ENCODE measurements at regions of chr20 and their contacts with region 1.

Region 1: DNA sequence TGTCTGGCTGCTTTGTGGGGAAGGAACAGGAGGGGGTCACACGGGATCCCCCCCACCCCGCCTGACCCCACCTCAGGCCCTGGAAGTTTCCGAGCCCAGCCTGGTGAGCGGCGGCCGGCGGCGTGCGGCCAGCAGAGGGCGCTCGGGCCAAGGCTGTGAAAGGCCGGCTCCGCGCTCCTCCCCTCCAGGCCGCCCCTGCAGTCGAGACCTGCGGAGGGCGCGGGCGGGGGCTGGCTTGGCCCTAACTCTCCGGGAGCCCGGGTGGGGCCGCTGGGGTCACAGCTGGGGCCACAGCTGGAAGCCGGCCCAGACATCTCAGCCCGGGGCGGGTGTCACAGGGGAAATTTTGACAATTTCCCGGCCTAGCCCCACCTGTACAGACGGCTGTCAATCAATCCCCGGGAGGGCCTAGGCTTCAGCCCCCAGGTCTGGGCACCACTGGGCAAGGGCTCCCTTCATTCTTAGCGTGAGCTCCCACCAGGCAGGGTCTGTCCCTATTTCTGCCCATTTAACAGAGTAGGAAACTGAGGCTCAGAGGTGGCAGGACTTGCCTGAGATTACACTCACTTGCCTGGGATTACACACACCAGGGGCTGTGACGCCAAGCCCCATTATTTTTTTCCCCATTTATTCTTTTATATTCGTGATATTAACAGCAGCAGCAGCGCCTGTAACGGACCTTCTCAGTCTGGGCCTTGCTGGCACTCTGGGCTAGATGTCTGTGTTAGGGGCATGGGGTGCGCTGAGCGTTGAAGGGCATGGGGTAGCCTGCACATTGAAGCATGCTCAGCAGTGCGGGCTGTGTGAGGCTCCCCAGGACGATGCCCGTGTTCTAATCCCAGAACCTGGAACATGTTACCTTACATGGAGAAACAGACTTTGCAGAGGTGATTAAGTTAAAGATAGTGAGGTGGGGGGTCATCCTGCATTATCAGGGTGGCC is 23.0 kb downstream of the ZBP1 start:
- DNase-seq: peak; percentile 64
- H3K4me3 ChIP-seq: no peak overlapping the region
- H3K27ac ChIP-seq: no peak overlapping the region
- H3K4me1 ChIP-seq: no peaks in the 10 kb centered on the region
- H3K27me3 ChIP-seq: no peaks in the 10 kb centered on the region
- CTCF ChIP-seq: peak; percentile 85

Region 2: DNA sequence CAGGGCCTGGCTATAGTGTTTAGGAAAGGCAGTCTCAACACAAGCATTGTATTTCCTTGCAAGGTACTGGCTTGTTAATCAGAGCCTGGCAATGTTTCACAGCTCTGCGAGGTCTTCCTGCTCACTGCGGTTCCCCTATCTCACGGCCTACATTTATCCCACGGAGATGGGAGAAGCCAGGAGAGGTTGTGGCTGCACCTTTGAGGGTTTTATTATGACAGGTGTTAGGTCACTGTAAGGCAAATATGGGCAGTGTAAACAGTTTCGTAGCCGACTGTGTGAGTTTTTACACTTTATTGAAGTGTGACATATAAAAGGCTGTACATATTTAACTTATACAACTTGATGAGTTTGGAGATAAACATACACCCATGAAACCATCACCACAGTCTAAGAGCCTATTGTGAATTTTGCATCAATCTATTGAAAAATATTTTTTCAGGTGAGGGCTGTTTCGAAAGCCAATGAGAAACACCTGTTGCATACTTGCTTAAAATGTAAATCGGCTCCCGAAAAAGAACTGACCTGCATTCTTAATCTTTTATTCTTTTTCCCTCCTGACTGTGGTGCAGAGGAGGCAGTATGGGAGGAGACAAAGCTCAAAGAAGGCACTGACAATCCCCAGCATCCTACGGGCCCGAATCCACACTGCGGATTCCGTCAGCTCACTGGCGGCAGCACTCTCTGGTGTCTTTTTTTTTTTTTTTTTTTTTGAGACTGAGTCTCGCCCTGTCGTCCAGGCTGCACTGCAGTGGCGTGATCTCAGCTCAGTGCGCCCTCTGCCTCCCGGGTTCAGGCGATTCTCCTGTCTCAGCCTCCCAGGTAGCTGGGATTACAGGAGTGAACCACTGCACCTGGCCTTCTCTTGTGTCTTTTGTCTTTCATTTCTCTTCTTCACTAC is 213.6 kb before region 1 on chr20:
- CTCF ChIA-PET with region 1: no interaction called
- POLR2A ChIA-PET with region 1: no interaction called
- intact Hi-C with region 1: loop called (anchors 5 kb)
- DNase-seq: no peak
- H3K4me3 ChIP-seq: no peak overlapping the region
- H3K27ac ChIP-seq: no peak overlapping the region
- H3K4me1 ChIP-seq: no peaks in the 10 kb centered on the region
- H3K27me3 ChIP-seq: no peaks in the 10 kb centered on the region
- CTCF ChIP-seq: no peak

Region 3: GRCh38 chr20:57514273-57514751 is 83.0 kb before region 1 on chr20:
- CTCF ChIA-PET with region 1: interaction called, 5 read pairs
- POLR2A ChIA-PET with region 1: no interaction called
- intact Hi-C with region 1: loop called (anchors 1 kb)
- DNase-seq: peak; percentile 68
- H3K4me3 ChIP-seq: no peak overlapping the region
- H3K27ac ChIP-seq: no peak overlapping the region
- H3K4me1 ChIP-seq: no peaks in the 10 kb centered on the region
- H3K27me3 ChIP-seq: no peaks in the 10 kb centered on the region
- CTCF ChIP-seq: peak; percentile 75

Region 4: GRCh38 chr20:57582432-57583305 is 14.6 kb before region 1 on chr20:
- CTCF ChIA-PET with region 1: interaction called, 14 read pairs
- POLR2A ChIA-PET with region 1: no interaction called
- intact Hi-C with region 1: no loop called
- DNase-seq: peak; percentile 83
- H3K4me3 ChIP-seq: peak overlapping the region; percentile 24
- H3K27ac ChIP-seq: peak overlapping the region; percentile 78
- H3K4me1 ChIP-seq: peaks cover 40% of the 10 kb centered on the region
- H3K27me3 ChIP-seq: no peaks in the 10 kb centered on the region
- CTCF ChIP-seq: peak; percentile 78

Region 5: DNA sequence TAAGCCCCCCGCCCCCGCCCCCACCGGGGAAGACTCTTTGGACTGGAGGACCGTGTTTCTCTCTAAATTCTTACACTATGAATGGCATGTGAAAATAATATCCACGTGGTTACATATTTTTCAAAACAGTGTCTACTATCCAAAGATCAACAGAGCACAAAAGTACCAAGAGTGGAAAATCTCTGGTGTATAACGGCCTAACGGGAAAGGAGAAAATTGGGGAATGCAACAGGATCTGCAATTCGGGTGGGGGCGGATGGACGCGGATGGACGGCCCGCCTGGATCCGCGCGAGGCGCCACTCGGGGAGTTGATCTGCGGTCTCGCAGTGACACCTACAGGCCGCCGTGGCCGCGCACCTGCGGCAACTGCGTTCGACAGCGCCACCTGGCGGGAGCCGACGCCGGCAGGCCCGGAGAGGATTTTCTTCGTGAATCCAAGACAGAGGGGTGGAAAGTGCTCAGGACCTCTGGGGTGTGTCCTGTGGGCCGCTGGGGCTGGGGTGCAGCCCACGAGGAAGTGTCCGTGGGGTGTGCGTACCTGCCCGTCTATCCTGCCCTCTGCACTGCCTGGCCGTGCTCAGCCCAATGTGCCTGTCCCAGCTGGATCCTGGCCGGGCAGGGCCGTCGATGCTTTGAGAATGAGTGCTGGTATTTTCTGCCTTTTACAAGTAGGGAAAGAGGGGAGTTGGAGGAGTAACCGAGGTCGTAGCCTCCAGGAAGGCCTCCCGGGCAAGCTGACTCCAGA is 612.6 kb after region 1 on chr20:
- CTCF ChIA-PET with region 1: interaction called, 3 read pairs
- POLR2A ChIA-PET with region 1: no interaction called
- intact Hi-C with region 1: loop called (anchors 2 kb)
- DNase-seq: peak; percentile 78
- H3K4me3 ChIP-seq: no peak overlapping the region
- H3K27ac ChIP-seq: no peak overlapping the region
- H3K4me1 ChIP-seq: no peaks in the 10 kb centered on the region
- H3K27me3 ChIP-seq: no peaks in the 10 kb centered on the region
- CTCF ChIP-seq: peak; percentile 100